Mammary epithelial cell (primary cell): ENCODE measurements at regions of chr2 and their contacts with region 1.

Region 1: GRCh38 chr2:190648289-190649034 is 421 bp upstream of the NAB1 start:
- DNase-seq: peak; percentile 87
- H3K4me3 ChIP-seq: peak overlapping the region; percentile 63 to 81 (median 65)
- H3K27ac ChIP-seq: peak overlapping the region; percentile 79
- H3K4me1 ChIP-seq: peaks cover 31% of the 10 kb centered on the region
- H3K27me3 ChIP-seq: no peaks in the 10 kb centered on the region
- CTCF ChIP-seq: no peak

Region 2: DNA sequence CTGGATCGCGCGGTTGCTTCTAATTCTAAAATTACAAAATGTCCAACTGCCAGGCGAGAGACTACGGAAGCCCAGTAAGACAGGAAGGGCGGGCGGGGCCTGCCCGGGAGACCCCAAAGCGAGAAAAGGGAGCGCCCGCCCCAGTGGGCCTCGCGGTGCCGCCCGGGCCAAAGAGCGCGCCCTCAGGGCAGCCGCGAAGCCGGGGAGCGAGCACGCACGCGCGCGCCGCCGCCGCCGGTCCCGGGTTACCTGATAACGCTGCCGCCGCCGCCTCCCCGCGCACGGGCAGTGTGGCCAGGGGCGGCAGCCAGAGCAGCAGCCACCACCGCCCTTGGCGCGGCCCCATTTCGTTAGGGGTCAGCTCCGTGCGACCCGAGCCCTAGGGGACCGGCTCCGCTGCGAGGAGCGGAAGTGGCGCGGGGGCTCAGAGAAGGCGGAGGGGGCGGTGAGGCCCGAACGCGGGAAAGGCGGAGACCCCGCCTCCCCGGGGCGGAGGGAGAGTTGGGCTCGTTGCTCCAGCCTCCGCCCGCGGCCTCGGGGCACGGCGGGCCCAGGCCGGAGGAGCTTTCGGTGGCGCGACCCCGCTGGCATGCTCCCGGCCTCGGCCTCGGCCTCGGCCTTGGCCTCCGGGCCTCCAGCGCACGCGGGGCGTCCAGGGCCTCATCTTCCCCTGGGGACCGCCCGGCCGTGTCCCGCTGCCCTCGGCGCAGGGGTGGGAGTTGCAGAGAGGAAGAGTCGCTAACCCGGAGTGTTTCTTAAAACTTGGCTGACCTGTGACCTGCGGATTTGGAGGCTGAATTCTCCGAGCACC is 113.9 kb before region 1 on chr2 and contains the start of gene NEMP2:
- CTCF ChIA-PET with region 1: no interaction called
- dilution Hi-C with region 1: no loop called
- in situ Hi-C with region 1: no loop called
- intact Hi-C with region 1: loop called (anchors 1 kb)
- DNase-seq: peak; percentile 69
- H3K4me3 ChIP-seq: peak within 1 kb of the TSS; percentile 75 to 91 (median 86)
- H3K27ac ChIP-seq: peak within 1 kb of the TSS; percentile 78
- H3K4me1 ChIP-seq: peaks cover 22% of the 10 kb centered on the region
- H3K27me3 ChIP-seq: no peaks in the 10 kb centered on the region
- CTCF ChIP-seq: no peak
- total RNA-seq, gene NEMP2: 5.0 to 6.0 TPM

Region 3: GRCh38 chr2:190571686-190572085 is 76.8 kb before region 1 on chr2:
- CTCF ChIA-PET with region 1: no interaction called
- dilution Hi-C with region 1: no loop called
- in situ Hi-C with region 1: no loop called
- intact Hi-C with region 1: loop called (anchors 5 kb)
- DNase-seq: peak; percentile 90
- H3K4me3 ChIP-seq: no peak overlapping the region
- H3K27ac ChIP-seq: peak overlapping the region; percentile 72
- H3K4me1 ChIP-seq: peaks cover 43% of the 10 kb centered on the region
- H3K27me3 ChIP-seq: no peaks in the 10 kb centered on the region
- CTCF ChIP-seq: no peak

Region 4: DNA sequence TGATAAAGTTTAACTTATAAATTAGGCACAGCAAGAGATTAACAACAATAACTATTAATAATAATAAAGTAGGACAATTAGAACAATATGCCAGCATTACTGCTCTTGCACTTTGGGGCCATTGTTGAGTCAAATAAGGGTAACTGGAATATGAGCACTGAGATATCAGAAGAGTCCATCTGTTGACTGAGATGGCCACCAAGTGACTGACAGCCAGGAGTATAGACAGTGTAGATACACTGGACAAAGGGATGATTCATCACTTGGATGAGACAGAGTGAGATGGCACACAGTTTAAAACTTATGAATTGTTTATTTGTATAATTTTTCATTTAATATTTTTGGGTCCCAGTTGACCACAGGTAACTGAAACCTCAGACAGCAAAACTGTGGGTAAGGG is 20.4 kb after region 1 on chr2:
- CTCF ChIA-PET with region 1: no interaction called
- dilution Hi-C with region 1: no loop called
- in situ Hi-C with region 1: no loop called
- intact Hi-C with region 1: loop called (anchors 2 kb)
- DNase-seq: peak; percentile 53
- H3K4me3 ChIP-seq: no peak overlapping the region
- H3K27ac ChIP-seq: no peak overlapping the region
- H3K4me1 ChIP-seq: peaks cover 20% of the 10 kb centered on the region
- H3K27me3 ChIP-seq: no peaks in the 10 kb centered on the region
- CTCF ChIP-seq: no peak

Region 5: DNA sequence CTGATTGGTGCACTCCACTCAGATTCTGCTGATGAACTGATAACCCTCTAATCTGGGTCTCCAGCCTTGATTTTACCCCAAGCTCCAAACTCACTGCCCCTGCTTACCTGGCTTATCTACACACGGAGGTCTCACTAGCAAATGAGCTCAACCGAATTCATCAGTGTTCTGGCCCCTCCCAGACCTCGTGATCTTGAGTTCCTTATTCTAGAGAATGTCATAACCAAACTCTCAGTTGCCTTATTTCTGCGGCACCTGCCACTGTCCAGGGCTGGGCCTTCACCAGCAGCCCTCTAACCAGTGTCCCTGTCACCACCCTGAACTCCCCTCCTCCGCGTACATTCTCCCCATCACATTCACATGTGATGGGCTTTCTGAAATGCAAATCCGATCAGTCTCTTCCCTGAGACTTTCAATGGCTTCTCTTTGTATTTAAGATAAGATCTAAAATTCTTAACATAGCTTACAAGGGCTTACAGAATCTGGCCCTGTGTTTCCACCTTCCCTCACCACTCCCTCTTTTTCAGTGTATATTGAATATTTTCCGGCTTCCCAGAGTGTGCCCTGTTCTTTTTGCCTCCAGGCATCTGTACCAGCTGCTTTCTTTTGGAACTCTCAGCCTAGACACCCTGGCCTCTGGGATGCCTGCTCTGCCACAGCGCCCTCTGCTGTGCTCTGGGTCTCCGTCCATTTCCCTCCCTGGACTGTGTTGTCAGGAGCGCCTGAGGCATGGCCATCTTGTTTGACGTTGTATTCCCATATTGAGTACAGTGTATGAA is 31.5 kb after region 1 on chr2:
- CTCF ChIA-PET with region 1: no interaction called
- dilution Hi-C with region 1: no loop called
- in situ Hi-C with region 1: no loop called
- intact Hi-C with region 1: no loop called
- DNase-seq: peak; percentile 32
- H3K4me3 ChIP-seq: no peak overlapping the region
- H3K27ac ChIP-seq: no peak overlapping the region
- H3K4me1 ChIP-seq: peaks cover 3% of the 10 kb centered on the region
- H3K27me3 ChIP-seq: no peaks in the 10 kb centered on the region
- CTCF ChIP-seq: peak; percentile 48 to 62

Region 6: DNA sequence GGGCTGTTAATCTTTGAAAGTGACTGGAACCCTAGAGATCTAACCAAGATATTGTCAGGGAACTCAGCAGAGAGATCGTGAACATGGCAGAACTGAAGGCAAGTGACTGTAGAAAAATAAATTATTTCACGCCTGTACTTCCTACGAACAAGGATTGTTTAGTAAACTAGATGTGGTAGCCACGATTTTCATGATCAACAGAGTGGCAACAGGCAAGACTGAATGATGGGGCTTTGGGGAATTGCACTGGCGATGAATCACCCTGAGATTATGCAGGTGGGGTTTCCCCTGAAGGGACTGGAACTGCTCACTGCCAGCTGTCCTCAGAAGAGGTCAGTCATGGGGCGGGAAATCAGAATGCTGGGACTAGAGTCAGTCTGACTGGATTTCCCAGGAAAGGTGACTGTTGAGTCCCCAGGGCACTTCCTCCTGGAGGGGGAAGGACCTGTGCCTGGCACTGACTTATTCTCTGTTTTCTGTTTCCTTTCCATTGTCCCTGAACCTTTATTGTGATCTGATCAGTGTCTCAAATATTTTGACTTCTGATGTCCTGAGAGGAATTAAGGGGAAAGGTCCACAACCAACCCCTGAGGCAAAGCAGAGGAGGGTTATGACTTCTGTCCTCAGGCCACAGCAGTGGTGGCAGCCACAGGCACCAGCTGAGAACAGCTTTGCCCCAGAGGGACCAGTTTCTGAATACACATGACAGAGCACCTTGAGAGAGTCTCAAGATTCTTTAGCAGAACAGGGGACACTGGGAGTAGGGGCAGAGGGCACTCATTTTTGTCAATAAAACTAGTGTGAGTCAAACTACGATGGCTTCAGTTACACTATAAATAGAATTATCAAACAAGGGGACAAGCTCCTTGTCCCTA is 70.4 kb after region 1 on chr2:
- CTCF ChIA-PET with region 1: no interaction called
- dilution Hi-C with region 1: loop called (anchors 5 kb)
- in situ Hi-C with region 1: no loop called
- intact Hi-C with region 1: no loop called
- DNase-seq: peak; percentile 94
- H3K4me3 ChIP-seq: no peak overlapping the region
- H3K27ac ChIP-seq: peak overlapping the region; percentile 63
- H3K4me1 ChIP-seq: peaks cover 52% of the 10 kb centered on the region
- H3K27me3 ChIP-seq: no peaks in the 10 kb centered on the region
- CTCF ChIP-seq: no peak

Region 7: GRCh38 chr2:190940454-190940853 is 292.0 kb after region 1 on chr2:
- CTCF ChIA-PET with region 1: no interaction called
- dilution Hi-C with region 1: no loop called
- in situ Hi-C with region 1: no loop called
- intact Hi-C with region 1: no loop called
- DNase-seq: no peak
- H3K4me3 ChIP-seq: no peak overlapping the region
- H3K27ac ChIP-seq: no peak overlapping the region
- H3K4me1 ChIP-seq: no peaks in the 10 kb centered on the region
- H3K27me3 ChIP-seq: no peaks in the 10 kb centered on the region
- CTCF ChIP-seq: no peak